Activated CD4-positive, alpha-beta T cell treated with anti-CD3 and anti-CD28 coated beads, Interleukin-2, amount 10 ng/mL, durations not matched to agents 7 days and 5 days (primary cell): ENCODE measurements at regions of chr15 and their contacts with region 1.

Region 1: DNA sequence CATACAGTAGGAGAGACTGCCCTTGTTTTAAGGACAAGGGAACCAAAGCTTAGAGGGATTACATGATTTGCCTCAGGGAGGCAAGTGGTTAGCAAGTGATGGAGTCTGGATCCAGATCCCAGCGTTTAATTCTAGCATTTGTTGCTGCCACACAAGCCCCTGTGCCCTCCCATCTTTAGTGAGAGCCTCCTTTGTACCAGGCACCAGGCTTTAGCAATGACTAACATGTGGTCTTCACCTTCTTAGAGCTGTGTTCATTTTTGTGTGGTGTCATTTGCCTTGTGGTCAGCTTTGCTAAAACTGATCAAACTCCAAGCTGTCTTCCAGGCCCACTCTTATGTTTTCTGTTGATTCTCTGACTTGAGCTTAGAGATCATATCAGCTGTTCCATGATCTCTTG is 290.5 kb downstream of the RPLP1 start:
- DNase-seq: no peak
- H3K4me3 Mint-ChIP-seq: no peak overlapping the region
- H3K27ac Mint-ChIP-seq: no peak overlapping the region
- H3K4me1 Mint-ChIP-seq: peaks cover 34% of the 10 kb centered on the region
- H3K27me3 Mint-ChIP-seq: peaks cover 9% of the 10 kb centered on the region

Region 2: DNA sequence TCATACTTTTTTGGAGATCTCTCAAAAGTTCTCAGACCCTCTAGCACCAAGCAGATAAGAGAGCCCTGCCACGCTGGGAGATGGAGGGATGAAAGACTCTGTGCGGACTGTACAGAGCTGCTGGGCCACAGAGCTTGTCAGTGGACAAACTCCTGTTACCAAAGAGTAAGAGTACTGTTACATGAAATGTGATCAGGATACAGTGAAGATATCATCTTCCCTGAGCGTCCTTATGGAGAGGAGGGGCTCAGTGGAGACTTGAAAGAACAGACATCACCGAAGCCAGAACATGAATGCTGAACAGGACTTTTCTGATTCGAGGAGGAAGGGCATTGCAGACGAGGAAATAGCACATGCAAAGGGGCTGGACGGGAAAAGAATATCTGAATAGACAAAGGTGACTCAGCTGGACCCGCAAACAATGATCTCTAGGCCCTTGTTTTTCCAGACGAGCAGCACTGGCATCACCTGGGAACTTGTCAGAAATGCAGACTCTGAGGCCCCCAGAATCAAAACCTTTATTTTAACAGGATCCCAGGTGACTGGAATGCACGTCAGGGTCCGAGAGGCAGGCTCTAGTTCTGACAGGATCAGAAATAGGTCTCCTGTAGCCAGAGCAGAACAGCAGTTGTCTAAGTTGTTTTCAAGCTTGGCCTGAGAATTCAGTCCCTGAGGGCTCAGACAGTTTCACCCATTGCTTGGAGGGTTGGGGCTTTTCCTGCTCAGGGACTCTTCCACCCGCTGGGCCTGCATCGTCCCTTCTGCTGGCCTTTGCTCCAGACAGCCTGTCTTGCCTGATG is 12.6 kb before region 1 on chr15:
- CTCF ChIA-PET with region 1: interaction called, 14 read pairs
- POLR2A ChIA-PET with region 1: no interaction called
- DNase-seq: no peak
- H3K4me3 Mint-ChIP-seq: no peak overlapping the region
- H3K27ac Mint-ChIP-seq: peak overlapping the region; percentile 33
- H3K4me1 Mint-ChIP-seq: peaks cover 55% of the 10 kb centered on the region
- H3K27me3 Mint-ChIP-seq: peaks cover 6% of the 10 kb centered on the region

Region 3: DNA sequence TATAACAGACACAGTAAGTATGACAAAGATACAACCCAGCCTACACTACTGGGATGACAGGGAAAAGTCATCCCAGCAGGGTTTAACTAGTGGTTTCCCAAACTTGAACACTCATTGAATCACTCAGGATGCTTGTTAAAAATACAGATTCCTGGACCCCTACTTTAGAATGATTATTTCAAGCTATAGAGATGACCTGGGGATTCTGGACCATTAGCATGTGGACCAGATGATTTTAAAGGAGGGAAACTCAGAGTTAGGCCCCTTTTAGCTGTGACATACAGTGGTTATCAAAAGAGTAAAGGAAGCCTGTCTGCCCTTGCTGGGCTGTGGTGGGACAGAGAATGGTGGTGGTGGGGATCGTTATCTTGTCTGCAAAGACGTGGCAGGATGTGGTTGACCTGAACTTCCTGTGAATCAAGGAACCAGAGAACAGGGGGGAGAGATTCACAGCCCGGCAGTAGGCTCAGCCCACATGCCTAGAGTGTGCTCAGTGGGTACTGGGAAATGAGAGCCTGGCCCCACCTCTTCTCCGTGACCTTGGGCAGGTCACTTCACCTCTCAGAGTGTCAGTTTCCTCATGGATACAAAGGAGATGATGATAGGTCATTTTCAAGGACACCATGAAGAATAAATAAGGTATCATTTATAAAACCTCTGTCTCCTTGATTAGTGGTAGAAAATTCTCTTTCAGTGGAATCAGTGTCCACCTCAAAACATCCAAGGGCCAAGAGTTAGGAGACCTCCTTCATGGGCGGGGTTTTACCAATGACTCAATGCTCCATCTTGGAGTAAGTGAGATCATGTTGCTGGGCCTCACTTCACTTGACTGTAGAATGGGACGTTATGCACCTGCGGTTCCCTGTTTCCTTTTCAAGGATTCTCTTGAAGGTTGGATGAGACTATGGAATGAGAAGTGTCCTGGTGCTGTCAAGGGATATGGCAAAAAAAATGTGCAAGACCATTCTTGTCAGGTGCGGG is 16.0 kb after region 1 on chr15:
- CTCF ChIA-PET with region 1: interaction called, 12 read pairs
- POLR2A ChIA-PET with region 1: interaction called, 8 read pairs
- DNase-seq: peak; percentile 96
- H3K4me3 Mint-ChIP-seq: peak overlapping the region; percentile 36
- H3K27ac Mint-ChIP-seq: peak overlapping the region; percentile 82
- H3K4me1 Mint-ChIP-seq: peaks cover 94% of the 10 kb centered on the region
- H3K27me3 Mint-ChIP-seq: peaks cover 10% of the 10 kb centered on the region

Region 4: GRCh38 chr15:69794645-69795461 is 51.8 kb after region 1 on chr15:
- CTCF ChIA-PET with region 1: no interaction called
- POLR2A ChIA-PET with region 1: no interaction called
- DNase-seq: no peak
- H3K4me3 Mint-ChIP-seq: no peak overlapping the region
- H3K27ac Mint-ChIP-seq: no peak overlapping the region
- H3K4me1 Mint-ChIP-seq: peaks cover 3% of the 10 kb centered on the region
- H3K27me3 Mint-ChIP-seq: peaks cover 7% of the 10 kb centered on the region